H1 (cell line): ENCODE measurements at regions of chr10 and their contacts with region 1.

Region 1: GRCh38 chr10:77846718-77847630 is 79.6 kb downstream of the DLG5 start:
- DNase-seq: peak; percentile 63 to 95
- H3K4me3 ChIP-seq: no peak overlapping the region
- H3K27ac ChIP-seq: peak overlapping the region; percentile 62; the same call in 1 of the 2 replicates
- H3K4me1 ChIP-seq: peaks cover 11 to 25% (median 12%) of the 10 kb centered on the region in 4 experiments
- H3K27me3 ChIP-seq: no peaks in the 10 kb centered on the region
- CTCF ChIP-seq: peak; percentile 87 to 91 (median 91)
- EP300 ChIP-seq: no peak
- POLR2A ChIP-seq: no peak
- RAD21 ChIP-seq: peak; percentile 81 to 86

Region 2: GRCh38 chr10:77746047-77746707 is 100.8 kb before region 1 on chr10:
- CTCF ChIA-PET with region 1: no interaction called
- POLR2A ChIA-PET with region 1: no interaction called
- DNase-seq: no peak
- H3K4me3 ChIP-seq: no peak overlapping the region
- H3K27ac ChIP-seq: no peak overlapping the region
- H3K4me1 ChIP-seq: no peaks in the 10 kb centered on the region
- H3K27me3 ChIP-seq: peaks cover 0 to 3% (median 0%) of the 10 kb centered on the region in 4 experiments; a peak in 1 of 7 replicates
- CTCF ChIP-seq: no peak
- EP300 ChIP-seq: no peak
- POLR2A ChIP-seq: no peak
- RAD21 ChIP-seq: no peak

Region 3: DNA sequence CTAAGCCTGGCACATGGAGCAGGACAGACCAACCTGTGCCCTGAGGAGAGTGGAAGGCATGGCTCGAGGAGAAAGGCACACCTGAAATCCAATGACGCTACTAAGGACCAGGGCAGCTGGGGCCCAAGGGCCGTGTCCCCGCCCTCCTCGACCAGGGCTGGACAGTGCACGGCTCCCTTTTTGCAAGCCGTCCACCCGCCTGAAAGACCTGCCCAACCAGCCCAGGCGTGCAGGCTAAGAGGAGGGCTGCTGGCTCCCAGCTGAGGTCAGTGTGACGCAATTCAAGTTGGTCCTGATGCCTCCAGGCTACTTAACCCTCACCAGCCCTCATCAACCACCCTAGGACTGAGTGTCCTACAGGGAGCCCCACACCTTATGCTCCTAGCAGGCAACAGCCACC is 10.3 kb after region 1 on chr10:
- CTCF ChIA-PET with region 1: interaction called, 15 read pairs
- POLR2A ChIA-PET with region 1: interaction called, 6 read pairs
- DNase-seq: no peak
- H3K4me3 ChIP-seq: no peak overlapping the region
- H3K27ac ChIP-seq: no peak overlapping the region
- H3K4me1 ChIP-seq: peaks cover 0 to 4% (median 3%) of the 10 kb centered on the region in 4 experiments; a peak in 2 of 7 replicates
- H3K27me3 ChIP-seq: no peaks in the 10 kb centered on the region
- CTCF ChIP-seq: no peak
- EP300 ChIP-seq: no peak
- POLR2A ChIP-seq: no peak
- RAD21 ChIP-seq: no peak

Region 4: DNA sequence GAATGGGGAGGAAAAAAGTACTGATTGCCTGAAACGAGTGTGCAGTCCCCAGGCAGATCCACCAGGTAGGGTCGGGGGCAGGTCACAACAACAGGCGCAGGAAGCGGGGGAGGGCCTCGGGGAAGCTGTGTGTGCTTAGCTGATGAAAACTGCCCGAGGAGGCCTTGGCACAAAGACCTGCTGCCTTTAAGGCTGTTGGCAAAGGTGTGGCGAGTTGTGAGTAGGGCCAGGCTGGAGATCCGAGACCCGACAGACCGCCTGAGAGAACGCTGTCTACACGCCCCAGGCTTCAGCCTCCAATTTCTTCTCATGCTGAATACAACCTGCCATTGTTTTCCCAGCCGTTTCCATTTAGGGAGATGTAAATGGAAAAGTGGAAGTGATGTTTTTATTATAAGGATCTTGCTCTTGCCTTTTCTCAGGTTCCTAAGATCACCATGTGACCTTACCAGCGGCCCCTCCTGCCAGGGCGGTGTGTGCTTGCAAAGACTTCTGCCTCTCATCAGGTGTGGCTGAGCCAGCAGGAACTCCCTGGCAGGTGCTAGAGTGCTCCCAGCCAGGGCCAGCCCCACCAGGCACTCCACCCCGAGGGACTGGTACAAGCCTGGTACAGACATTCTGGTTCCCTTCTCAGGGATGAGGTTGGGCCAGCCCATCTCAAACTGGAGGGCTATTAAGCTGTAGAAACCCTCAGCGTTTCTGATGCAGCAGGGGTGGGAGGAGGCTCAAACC is 18.8 kb after region 1 on chr10:
- CTCF ChIA-PET with region 1: interaction called, 15 read pairs
- POLR2A ChIA-PET with region 1: interaction called, 6 read pairs
- DNase-seq: no peak
- H3K4me3 ChIP-seq: no peak overlapping the region
- H3K27ac ChIP-seq: no peak overlapping the region
- H3K4me1 ChIP-seq: peaks cover 3 to 25% (median 11%) of the 10 kb centered on the region in 4 experiments
- H3K27me3 ChIP-seq: no peaks in the 10 kb centered on the region
- CTCF ChIP-seq: no peak
- EP300 ChIP-seq: no peak
- POLR2A ChIP-seq: no peak
- RAD21 ChIP-seq: no peak

Region 5: GRCh38 chr10:77873536-77874380 is 26.8 kb after region 1 on chr10:
- CTCF ChIA-PET with region 1: interaction called, 13 read pairs
- POLR2A ChIA-PET with region 1: interaction called, 7 read pairs
- DNase-seq: no peak
- H3K4me3 ChIP-seq: no peak overlapping the region
- H3K27ac ChIP-seq: no peak overlapping the region
- H3K4me1 ChIP-seq: peaks cover 7 to 34% (median 18%) of the 10 kb centered on the region in 4 experiments
- H3K27me3 ChIP-seq: no peaks in the 10 kb centered on the region
- CTCF ChIP-seq: no peak
- EP300 ChIP-seq: no peak
- POLR2A ChIP-seq: no peak
- RAD21 ChIP-seq: no peak

Region 6: GRCh38 chr10:77898647-77899477 is 51.9 kb after region 1 on chr10:
- CTCF ChIA-PET with region 1: interaction called, 13 read pairs
- POLR2A ChIA-PET with region 1: no interaction called
- DNase-seq: no peak
- H3K4me3 ChIP-seq: no peak overlapping the region
- H3K27ac ChIP-seq: no peak overlapping the region
- H3K4me1 ChIP-seq: peaks cover 0 to 15% (median 10%) of the 10 kb centered on the region in 4 experiments; a peak in 5 of 7 replicates
- H3K27me3 ChIP-seq: no peaks in the 10 kb centered on the region
- CTCF ChIP-seq: no peak
- EP300 ChIP-seq: no peak
- POLR2A ChIP-seq: no peak
- RAD21 ChIP-seq: no peak

Region 7: DNA sequence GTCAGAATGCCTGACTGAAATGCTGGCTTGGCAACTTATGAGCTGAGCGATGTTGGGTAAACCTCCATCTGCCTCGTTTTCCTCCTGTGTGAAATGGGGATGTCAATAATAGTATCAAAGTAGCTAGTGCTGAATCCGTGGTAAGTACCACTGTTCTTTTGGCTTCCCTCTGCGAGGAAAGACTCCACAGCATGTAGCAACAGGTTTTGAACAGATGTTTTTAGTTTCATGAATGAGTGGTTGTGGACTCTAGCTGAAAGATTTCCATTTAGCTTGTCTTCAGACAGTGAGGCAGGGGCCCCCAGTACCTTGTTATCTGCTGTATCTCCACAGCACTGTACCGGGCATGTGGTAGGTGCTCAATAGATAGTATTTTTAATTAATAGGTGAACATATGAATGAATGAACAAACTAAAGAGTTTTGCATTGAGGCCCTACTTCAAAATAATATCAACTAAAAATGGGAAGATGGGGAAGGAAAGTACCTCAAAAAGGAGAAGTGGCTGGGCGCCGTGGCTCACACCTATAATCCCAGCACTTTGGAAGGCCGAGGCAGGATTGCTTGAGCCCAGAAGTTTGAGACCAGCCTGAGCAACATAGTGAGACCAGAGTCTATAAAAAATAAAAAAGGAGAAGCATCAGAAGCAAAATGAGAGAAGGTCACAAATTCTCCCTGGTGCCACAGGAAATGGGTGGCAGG is 85.2 kb after region 1 on chr10:
- CTCF ChIA-PET with region 1: interaction called, 12 read pairs
- POLR2A ChIA-PET with region 1: no interaction called
- DNase-seq: no peak
- H3K4me3 ChIP-seq: no peak overlapping the region
- H3K27ac ChIP-seq: no peak overlapping the region
- H3K4me1 ChIP-seq: peaks cover 0 to 7% (median 0%) of the 10 kb centered on the region in 4 experiments; a peak in 1 of 7 replicates
- H3K27me3 ChIP-seq: peaks cover 0 to 4% (median 2%) of the 10 kb centered on the region in 4 experiments; a peak in 1 of 7 replicates
- CTCF ChIP-seq: no peak
- EP300 ChIP-seq: no peak
- POLR2A ChIP-seq: no peak
- RAD21 ChIP-seq: no peak

Region 8: GRCh38 chr10:77983384-77984341 is 136.7 kb after region 1 on chr10:
- CTCF ChIA-PET with region 1: interaction called, 10 read pairs
- POLR2A ChIA-PET with region 1: no interaction called
- DNase-seq: no peak
- H3K4me3 ChIP-seq: no peak overlapping the region
- H3K27ac ChIP-seq: no peak overlapping the region
- H3K4me1 ChIP-seq: no peaks in the 10 kb centered on the region
- H3K27me3 ChIP-seq: no peaks in the 10 kb centered on the region
- CTCF ChIP-seq: no peak
- EP300 ChIP-seq: no peak
- POLR2A ChIP-seq: no peak
- RAD21 ChIP-seq: no peak

Region 9: DNA sequence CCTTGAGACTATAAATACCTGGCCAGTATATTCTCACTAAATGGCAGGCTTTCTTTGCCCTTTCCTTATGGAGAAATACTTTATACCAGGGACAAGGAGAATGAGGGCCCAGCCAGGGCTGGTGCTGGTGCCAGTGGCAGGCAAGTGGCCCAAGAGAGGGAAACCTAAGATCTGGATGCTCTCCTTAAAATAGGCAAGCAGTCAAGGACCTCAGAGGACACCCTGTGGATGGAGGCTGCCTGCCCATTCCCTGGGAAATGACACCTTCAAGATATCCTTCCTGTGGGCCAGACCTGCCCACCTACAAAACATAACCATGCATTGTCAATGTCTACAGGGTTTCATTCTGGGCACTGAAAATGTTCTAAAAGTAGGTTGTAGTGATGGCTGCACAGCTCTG is 153.2 kb after region 1 on chr10:
- CTCF ChIA-PET with region 1: no interaction called
- POLR2A ChIA-PET with region 1: no interaction called
- DNase-seq: no peak
- H3K4me3 ChIP-seq: no peak overlapping the region
- H3K27ac ChIP-seq: no peak overlapping the region
- H3K4me1 ChIP-seq: no peaks in the 10 kb centered on the region
- H3K27me3 ChIP-seq: no peaks in the 10 kb centered on the region
- CTCF ChIP-seq: no peak
- EP300 ChIP-seq: no peak
- POLR2A ChIP-seq: no peak
- RAD21 ChIP-seq: no peak